ENCODE measurements at regions of chr2 and their contacts with region 1.

Region 1: DNA sequence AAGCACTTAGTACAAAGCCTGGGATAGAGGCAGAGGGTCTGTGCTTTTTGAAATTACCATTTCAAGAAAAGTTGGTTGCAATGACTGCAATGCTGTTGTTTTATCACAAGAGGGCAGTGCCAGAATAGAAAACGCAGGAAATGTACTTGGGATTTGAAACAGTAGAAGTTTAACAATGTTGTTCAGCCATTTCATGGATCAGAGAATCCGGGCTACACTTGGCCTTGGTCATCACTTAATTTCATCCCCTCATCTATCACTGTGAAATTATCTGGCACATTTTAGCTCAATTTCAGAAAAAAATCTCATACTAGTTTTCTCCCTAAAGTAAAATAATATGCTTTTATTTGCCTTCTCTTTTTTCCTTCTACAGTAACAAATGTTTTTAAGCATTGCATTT is 70.8 kb downstream of the RAPGEF4 start:
- DNase-seq: no peak

Region 2: DNA sequence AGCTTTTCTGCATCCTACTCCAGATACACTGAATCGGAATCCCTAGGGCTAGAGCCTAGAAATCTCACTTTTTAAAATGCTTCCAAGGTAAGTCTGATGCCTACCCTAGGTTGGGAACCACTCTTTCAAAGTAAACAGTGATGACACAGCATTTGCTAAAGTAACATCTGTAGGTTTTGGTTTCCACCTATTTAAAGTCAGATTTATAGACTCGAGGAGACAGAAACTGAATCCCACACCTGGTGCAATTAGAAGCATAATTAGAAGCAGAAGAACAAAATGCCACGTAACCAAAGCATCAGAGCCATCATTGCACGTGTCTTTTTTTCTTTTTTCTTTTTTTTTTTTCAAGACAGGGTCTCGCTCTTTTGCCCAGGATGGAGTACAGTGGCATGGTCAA is 209.7 kb before region 1 on chr2:
- intact Hi-C with region 1: loop called (anchors 10 kb)
- DNase-seq: no peak

Region 3: DNA sequence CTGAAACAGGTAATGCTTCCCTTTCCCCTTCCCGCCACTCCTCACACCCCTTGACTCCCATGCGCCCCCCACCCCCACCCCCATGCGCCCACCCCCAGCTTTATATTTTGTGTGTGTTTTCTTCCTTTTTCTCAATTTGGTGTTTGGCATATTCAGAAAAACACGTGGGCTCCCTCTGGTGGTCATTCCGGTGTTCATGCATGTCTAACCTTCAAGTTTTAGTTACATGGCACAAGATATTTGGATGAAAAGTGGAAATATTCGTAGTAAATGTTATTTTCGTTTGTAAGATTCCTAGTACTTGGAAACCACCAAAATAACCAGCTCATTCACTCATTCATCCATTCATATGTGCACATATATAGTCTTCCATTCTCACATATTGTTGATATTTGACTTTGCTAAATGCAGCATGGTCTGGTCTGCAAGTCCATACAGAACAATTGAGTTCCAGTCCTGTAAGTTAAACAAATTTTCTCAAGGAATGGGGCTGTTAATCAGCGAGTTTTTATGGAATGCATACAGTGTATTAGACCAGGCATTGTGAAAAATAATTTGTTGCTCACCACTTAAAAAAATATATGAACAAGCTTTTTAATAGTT is 125.5 kb after region 1 on chr2:
- intact Hi-C with region 1: loop called (anchors 2 kb)
- DNase-seq: no peak

Region 4: DNA sequence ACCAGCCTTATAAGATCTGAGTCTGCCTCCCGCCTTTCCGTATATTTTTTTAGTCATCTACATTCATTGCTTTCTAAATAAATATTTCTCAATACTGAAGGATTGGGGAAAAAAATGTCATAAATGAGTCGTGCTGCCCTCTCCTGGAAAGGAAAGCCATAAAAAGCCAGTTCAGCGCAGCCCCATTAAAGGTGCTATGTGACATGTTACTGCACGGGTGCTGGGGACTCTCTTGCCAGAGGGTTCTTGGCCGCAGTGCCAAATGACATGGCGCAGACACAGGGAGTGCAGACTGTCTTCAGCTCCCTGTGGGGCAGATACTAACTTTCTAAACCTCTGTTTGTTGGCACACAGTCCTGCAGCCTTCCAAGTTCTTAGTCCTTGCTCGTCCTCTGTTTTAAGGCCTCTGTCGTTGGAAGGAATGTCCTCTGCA is 215.5 kb after region 1 on chr2:
- intact Hi-C with region 1: loop called (anchors 5 kb)
- DNase-seq: peak; percentile 79

Region 5: GRCh38 chr2:173205375-173205774 is 398.9 kb after region 1 on chr2:
- intact Hi-C with region 1: loop called (anchors 5 kb)
- DNase-seq: peak; percentile 86